MCF 10A (cell line): ENCODE measurements at regions of chr17 and their contacts with region 1.

Region 1: DNA sequence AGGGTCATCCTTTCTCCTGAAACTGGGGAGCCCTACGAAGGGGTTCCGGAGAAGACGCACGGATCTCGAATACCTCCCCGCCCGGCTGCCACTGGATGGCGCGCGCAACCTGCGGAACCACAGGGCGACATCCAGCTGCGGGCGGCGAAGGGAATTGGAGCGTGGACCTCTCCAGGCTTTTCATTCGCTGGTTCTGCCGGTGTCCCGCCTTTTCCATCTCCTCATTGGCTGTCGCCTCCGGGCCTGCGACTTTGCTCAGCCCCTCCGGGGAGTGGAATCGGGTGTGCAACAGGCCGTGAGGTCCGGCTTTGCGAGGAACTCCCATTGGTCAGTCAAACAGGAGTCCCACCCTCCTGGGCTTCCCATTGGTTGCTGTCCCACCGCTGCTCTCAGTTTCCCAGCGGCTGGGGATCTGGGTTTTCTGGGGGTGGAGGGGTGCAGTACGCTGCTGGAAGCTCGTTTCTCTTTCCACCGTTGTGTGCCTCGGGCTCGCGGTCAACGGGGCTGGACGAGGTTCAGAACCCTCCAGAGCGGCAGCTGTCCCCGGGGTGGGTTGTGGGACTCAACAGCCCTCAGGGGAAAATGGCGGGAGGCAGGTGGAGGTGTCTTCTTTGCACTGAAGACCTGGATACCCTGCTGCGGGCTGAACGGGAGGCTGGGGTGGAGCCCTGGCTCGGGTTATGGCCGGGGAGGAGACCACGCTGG is 14.5 kb downstream of the OR1D5 start:
- DNase-seq: peak; percentile 98
- H3K4me3 Mint-ChIP-seq: peak overlapping the region; percentile 96
- H3K27ac Mint-ChIP-seq: peak overlapping the region; percentile 86
- H3K4me1 Mint-ChIP-seq: peaks cover 5% of the 10 kb centered on the region
- H3K27me3 Mint-ChIP-seq: no peaks in the 10 kb centered on the region
- CTCF ChIP-seq: peak; percentile 86

Region 2: DNA sequence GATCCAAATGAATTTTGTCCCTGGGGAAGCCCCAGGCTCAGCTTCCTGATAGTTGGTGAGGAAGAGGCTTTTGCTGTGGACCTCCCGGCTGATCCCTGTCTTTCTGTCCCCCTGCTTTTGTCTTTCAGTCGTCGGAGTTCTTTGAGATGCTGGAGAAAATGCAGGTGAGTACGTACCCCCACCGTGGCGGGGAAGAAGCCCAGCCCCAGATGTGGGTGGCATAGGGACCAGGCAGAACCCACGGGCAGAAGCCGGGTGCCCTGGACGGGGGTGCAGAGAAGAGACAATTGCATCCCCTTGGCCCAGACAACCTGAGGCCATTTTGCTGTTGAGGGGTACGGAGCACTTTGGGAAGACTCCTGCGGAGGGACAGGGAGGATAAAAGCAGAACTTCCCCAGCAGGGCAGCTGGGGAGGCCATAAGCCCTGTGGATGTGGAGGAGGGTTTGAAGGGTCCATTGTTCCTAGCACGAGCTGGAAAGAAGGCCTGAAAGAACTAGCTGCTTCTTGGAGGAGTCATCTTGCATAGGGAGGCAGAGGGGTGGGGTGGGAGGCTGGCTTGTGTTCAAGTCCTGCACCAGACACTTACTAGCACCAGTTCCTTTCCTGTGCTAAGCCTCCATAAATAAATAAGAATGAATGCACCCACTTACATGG is 91.2 kb before region 1 on chr17:
- CTCF ChIA-PET with region 1: no interaction called
- POLR2A ChIA-PET with region 1: no interaction called
- intact Hi-C with region 1: no loop called
- DNase-seq: no peak
- H3K4me3 Mint-ChIP-seq: no peak overlapping the region
- H3K27ac Mint-ChIP-seq: peak overlapping the region; percentile 40
- H3K4me1 Mint-ChIP-seq: peaks cover 50% of the 10 kb centered on the region
- H3K27me3 Mint-ChIP-seq: no peaks in the 10 kb centered on the region
- CTCF ChIP-seq: no peak

Region 3: DNA sequence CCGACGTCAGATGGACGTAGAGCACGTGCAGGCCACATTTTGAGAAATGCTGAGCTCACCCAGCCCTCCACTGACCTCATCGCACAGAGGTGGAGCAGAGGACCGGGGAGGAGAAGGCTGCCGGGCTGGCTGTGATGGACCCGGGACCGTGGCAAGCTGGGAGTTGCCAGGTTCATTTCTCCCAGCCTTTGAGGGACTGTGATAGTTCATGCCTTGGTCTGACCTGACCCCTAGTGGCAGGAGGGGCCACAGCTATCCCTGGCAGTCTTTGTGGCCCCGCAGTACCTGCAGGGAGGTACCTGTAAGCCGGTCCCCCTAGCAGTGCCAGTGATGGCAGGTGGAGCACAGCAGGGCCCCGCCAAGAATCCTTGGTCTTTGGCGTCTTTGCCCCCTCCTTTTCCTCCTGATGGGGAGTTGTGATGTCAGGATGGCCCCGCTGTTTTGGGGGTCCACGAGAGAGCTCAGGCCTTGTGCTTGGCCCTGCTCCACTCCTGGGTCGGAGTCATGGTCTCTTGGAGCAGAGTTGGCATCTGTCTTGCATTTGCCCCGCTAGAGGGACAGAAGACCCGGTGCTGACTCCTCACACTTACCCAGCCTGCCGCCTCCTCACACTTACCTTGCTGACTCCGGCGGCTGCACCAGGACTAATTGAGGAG is 35.9 kb before region 1 on chr17:
- CTCF ChIA-PET with region 1: no interaction called
- POLR2A ChIA-PET with region 1: no interaction called
- intact Hi-C with region 1: no loop called
- DNase-seq: peak; percentile 69
- H3K4me3 Mint-ChIP-seq: no peak overlapping the region
- H3K27ac Mint-ChIP-seq: no peak overlapping the region
- H3K4me1 Mint-ChIP-seq: no peaks in the 10 kb centered on the region
- H3K27me3 Mint-ChIP-seq: no peaks in the 10 kb centered on the region
- CTCF ChIP-seq: peak; percentile 66

Region 4: DNA sequence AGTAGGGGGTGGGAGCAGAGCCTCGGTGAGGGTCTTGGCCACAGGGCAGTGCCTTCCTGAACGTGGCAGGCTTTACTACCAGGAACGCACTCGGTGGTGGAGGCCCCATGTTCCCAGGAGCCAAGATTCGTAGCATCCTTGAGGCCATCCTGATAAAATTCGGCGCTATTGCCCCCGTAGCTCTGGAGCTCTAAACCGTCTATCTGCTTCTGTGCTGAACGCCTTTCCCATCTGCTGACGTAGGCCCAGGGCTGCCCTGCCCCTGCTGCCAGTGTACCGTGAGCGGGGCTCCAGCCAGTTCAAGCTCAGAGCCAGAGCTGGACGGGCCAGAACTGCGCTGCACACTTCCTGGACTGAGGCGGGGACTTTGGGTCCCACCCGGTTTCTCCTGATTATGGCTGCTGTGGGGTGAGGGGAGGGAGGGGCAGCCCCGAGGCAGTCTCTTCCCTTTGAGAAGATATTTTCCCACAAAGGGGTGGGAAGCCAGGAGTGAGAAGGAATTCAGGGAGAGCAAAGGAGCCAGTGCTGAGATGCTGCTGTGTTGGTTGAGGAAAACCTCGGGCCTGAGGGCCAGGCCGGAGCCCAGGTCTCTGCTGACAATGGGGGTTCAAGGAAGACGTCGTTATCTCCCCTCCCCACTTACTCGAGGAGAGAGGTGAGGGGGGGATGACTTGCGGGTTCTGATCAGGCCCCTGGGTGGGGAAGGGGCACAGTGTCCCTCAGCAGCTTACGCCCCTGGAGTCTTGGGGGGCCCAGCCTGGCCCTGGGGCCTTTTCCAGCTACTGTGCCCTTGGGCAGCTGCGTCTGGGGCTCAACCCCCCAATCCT is 15.0 kb before region 1 on chr17:
- CTCF ChIA-PET with region 1: interaction called, 14 read pairs
- POLR2A ChIA-PET with region 1: no interaction called
- intact Hi-C with region 1: no loop called
- DNase-seq: no peak
- H3K4me3 Mint-ChIP-seq: no peak overlapping the region
- H3K27ac Mint-ChIP-seq: no peak overlapping the region
- H3K4me1 Mint-ChIP-seq: peaks cover 13% of the 10 kb centered on the region
- H3K27me3 Mint-ChIP-seq: peaks cover 5% of the 10 kb centered on the region
- CTCF ChIP-seq: no peak

Region 5: DNA sequence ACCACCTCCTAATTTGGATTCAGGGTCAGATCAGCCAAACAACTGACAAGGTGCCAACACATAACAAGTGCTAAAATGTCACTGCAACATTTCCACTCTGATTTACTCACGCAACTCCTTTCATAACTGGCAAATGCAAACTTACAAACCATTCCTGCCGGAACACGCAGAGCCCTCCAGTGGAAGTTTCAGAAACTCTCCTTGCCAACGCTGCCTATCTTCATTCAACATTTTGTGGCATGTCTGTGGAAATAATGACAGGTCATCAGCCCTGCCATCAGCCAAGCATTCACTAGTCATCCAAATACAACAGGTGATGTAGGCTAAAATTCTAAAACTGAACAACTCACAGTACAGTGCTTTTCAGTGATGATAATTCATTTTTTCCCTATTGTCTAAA is 287.0 kb after region 1 on chr17:
- CTCF ChIA-PET with region 1: no interaction called
- POLR2A ChIA-PET with region 1: no interaction called
- intact Hi-C with region 1: loop called (anchors 5 kb)
- DNase-seq: peak; percentile 18
- H3K4me3 Mint-ChIP-seq: no peak overlapping the region
- H3K27ac Mint-ChIP-seq: no peak overlapping the region
- H3K4me1 Mint-ChIP-seq: no peaks in the 10 kb centered on the region
- H3K27me3 Mint-ChIP-seq: peaks cover 11% of the 10 kb centered on the region
- CTCF ChIP-seq: peak; percentile 9

Region 6: DNA sequence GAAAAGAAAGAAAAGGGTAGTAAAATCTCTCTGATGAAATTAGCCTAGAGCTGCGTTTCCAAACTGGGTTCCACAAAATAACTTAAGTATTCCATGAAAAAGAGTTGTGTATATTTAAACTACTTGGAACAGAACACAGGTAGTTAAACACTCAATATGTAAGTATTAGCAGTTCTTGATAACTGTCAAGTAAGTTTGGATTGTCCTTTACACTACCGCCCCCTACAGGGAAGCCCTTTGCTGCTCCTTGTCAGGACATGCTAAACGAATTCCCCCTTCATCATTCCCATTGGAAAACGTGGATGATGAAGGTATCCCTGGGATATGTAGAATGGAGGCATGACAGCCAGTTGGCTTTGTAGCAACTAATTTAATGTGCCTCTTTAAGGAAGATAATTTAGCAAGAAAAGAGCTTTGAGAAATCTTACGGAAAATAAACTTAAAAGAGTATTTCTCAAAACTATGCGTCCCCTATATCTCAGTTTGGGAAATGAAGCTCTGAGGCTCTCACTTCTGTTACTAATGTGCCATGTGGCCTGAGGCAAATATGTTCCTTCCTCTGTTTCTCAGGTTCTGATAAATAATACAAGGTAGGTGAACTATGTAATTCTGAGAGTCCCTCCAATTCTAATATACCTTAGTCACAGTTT is 778.3 kb after region 1 on chr17:
- CTCF ChIA-PET with region 1: interaction called, 4 read pairs
- POLR2A ChIA-PET with region 1: no interaction called
- intact Hi-C with region 1: loop called (anchors 10 kb)
- DNase-seq: peak; percentile 76
- H3K4me3 Mint-ChIP-seq: no peak overlapping the region
- H3K27ac Mint-ChIP-seq: no peak overlapping the region
- H3K4me1 Mint-ChIP-seq: no peaks in the 10 kb centered on the region
- H3K27me3 Mint-ChIP-seq: no peaks in the 10 kb centered on the region
- CTCF ChIP-seq: peak; percentile 64